ENCODE measurements at regions of chrX and their contacts with region 1.

Region 1: GRCh38 chrX:110938977-110939732 is 143.5 kb upstream of the CHRDL1 start:
- DNase-seq: no peak
- ATAC-seq: no peak
- H3K4me3 Mint-ChIP-seq: no peak overlapping the region
- H3K27ac Mint-ChIP-seq: no peak overlapping the region
- H3K4me1 Mint-ChIP-seq: no peaks in the 10 kb centered on the region
- H3K27me3 Mint-ChIP-seq: peaks cover 7% of the 10 kb centered on the region

Region 2: DNA sequence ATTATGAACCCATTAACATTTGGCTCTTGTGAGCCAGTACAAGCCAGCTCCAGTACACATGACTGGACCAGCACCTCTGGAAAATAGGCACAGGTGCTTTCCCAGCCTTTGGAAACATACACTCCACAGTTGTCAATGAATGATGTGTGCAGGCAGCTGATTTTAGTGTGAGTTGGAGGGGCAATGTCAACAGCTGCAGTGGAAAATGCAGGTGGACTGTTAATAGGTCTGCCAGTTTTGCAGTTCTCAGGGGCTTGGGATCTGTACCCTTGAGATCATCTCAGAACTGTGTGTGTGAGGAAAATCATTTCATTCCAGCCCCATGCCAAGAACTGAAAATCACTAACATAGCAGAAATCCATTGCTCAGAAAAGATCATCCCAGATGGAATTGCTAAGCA is 61.8 kb before region 1 on chrX:
- CTCF ChIA-PET with region 1: no interaction called
- POLR2A ChIA-PET with region 1: no interaction called
- intact Hi-C with region 1: loop called in 1 of 2 experiments (anchors 10 kb)
- DNase-seq: no peak
- ATAC-seq: no peak
- H3K4me3 Mint-ChIP-seq: no peak overlapping the region
- H3K27ac Mint-ChIP-seq: no peak overlapping the region
- H3K4me1 Mint-ChIP-seq: no peaks in the 10 kb centered on the region
- H3K27me3 Mint-ChIP-seq: no peaks in the 10 kb centered on the region